Breast epithelium (tissue), 4 donors: ENCODE measurements at regions of chr7 and their contacts with region 1.

Region 1: DNA sequence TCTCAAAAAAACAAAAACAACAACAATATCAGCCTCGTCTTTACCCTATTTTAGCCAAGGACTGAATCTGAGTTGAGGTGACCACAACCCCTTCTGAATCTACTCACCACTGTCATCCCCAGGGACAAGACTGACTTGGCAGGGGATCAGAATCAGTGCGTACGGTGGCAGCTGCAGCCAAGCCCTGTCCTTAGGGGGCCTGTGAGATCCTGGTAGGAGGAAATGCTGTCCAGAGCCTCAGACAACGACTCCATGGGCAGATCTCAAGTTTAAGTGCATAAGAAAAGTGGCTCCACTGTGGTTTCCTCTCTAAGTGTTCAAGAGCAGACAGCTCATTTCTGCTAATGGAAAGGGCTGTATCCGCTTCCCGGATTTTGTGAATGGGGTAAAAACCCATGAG is 22.4 kb upstream of the CYTH3 start:
- DNase-seq: no peak
- H3K4me3 ChIP-seq: no peak overlapping the region
- H3K27ac ChIP-seq: no peak overlapping the region
- H3K4me1 ChIP-seq: no peaks in the 10 kb centered on the region
- H3K27me3 ChIP-seq: no peaks in the 10 kb centered on the region
- CTCF ChIP-seq: no peak
- POLR2A ChIP-seq: no peak

Region 2: DNA sequence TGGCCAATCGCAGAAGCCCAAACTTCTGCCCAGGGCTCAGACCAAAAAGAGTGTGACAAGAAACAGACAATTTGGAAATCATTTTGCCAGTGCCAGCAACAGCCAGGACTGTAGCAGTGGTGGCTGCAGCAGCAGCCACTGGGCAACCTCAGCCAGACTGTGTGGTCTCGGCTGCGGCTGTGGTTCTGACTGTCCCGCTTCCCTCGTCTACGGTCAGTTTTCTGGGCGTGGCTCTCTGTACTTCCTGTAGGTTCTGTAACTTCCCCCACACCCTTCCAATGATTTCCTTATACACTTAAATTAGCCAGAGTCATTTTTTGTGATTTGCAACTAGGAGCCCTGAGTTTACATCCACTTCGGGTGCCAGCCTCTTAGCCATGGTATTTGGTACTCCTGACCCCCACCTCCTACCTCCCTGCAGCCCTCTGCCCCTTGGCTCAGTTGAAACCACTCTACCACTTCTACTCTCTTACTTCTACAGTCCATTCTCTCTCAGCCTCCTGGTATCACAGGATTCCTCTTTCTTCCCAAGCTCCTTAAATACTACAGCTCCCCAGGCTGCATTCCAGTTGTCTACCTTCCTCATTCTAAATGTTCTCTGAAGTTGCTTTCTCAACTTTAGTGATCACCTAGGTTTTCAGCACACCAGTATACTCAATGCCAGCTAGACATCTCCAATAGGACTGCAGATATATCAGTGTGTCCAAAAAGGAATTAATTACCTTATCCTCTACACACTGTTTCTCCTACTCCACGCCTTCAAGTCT is 62.1 kb before region 1 on chr7:
- intact Hi-C with region 1: no loop called
- DNase-seq: no peak
- H3K4me3 ChIP-seq: no peak overlapping the region
- H3K27ac ChIP-seq: no peak overlapping the region
- H3K4me1 ChIP-seq: no peaks in the 10 kb centered on the region
- H3K27me3 ChIP-seq: no peaks in the 10 kb centered on the region
- CTCF ChIP-seq: no peak
- POLR2A ChIP-seq: no peak

Region 3: DNA sequence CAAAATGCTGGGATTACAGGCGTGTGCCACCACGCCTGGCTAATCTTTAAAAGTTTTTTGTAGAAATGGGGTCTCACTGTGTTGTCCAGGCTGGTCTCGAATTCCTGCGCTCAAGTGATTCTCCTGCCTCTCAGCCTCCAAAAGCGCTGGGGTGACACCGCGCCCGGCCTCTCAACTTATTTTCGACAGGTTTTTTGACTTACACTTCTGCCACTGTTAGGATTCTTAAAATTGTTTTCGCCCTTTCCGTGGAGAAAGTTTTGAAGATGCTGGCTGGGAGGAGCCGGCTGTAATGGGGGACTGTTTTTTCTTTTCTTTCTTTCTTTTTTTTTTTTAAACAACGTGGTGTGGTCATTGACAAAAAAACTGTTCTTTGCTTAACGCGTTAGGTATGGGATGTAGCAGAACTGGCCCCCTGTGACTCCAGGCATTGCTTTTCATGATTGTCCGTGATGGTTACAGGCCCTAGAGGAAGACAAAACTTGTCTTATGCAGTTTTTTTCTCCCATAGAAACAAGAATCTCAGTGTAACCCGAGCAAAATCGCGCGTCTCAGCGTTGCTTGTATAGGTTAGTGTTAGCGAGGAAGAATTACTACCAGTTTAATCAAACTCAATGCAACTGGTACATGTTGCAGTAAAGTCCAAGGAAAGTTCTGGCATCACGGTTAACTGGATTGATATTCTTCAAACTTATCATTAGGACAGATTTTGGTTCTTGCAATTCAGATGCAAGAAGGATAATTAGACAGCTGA is 80.7 kb after region 1 on chr7:
- intact Hi-C with region 1: loop called (anchors 2 kb)
- DNase-seq: no peak
- H3K4me3 ChIP-seq: peak overlapping the region; percentile 70 to 97 (median 76)
- H3K27ac ChIP-seq: peak overlapping the region; percentile 93 to 100
- H3K4me1 ChIP-seq: no peaks in the 10 kb centered on the region
- H3K27me3 ChIP-seq: no peaks in the 10 kb centered on the region
- CTCF ChIP-seq: no peak
- POLR2A ChIP-seq: no peak